Common myeloid progenitor, CD34-positive (primary cell): ENCODE measurements at regions of chr22 and their contacts with region 1.

Region 1: DNA sequence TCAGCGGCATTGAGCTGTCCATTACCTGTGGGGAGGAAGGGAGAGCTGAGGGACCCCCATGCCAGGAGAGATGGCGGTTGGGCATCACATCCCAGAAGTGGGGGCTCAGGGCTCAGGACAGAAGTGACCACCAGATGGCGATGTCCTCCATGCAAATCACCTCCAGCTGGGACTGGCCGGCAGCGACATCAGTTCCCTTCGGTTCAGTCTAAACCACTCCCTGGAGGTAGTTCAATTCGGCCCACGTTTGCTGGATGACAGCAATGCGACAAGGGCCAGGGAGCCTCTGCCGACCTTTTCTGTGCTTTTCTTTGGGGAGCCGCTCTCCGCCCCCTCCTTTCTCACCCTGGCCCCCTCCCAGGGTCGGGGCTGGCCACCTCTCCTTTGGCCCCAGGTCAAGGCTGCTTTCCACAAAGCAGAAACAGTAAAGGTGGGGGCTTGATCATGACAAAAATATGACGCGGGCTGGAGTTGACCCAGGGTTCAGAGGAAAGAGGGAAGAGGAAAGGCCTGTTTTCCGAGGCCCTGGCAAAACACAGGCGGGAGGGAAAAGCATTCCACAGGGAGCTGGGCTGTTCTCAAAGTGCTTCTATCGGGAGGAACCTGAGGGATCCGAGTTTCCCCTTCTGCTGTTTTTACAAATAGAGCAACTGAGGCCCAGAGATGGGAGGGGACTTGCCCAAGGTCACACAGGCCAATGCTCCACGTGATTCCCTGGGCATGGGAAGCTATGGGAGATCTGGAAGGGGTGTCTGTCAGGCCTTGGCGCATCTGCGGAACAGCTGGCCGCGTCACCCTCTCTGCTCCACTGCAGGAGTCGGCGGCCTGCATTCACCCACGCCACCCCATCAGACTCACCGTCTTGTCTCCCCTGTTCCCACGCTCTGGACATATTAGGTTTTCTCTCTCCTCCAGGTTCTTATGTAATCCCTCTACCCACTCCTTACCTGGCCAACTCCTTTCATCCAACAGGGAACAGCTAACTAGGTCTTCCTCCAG is 54.7 kb downstream of the FBXO7 start:
- DNase-seq: peak; percentile 83 to 92 (median 89)
- H3K4me3 ChIP-seq: no peak overlapping the region
- H3K27ac ChIP-seq: no peak overlapping the region
- H3K4me1 ChIP-seq: peaks cover 0 to 4% (median 3%) of the 10 kb centered on the region in 4 experiments
- H3K27me3 ChIP-seq: peaks cover 0 to 3% (median 0%) of the 10 kb centered on the region in 5 experiments

Region 2: DNA sequence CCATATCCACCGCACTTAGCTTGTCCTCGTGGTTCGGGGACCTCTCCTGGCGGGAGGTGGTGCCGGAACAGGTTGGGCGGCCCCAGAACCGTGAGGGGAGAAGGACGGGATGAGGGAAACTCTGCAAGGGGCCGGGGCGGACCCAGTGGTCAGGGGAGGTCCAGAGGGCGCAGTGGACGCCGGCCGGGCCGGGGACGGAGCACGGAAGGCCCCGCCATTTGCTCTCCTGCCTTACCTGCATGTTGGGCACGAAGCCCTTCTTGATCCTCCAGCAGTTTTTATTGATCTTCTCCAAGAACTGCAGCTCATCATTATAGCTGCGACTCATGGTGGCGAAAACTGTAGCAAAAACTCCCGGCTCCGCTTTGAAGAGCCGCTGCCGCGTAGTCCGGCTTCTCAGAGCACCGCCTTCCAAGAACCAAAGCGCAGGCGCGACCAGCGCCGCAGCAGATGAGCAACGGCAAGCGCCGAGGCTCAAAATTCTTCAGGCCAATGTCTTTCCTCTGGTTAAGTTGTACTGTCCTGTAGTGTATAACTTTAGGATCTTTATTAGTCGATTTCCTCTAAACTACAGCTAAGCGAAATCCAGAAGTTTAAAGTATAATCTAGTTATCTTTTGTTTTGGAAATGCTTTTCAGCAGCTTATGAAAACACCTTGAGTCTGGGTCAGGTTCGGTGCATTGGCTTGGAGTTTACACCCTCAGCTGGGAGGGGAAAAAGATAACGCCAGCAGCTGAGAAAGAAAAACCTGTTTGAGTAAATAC is 117.3 kb before region 1 on chr22 and contains the start of gene RTCB:
- CTCF ChIA-PET with region 1: no interaction called
- POLR2A ChIA-PET with region 1: no interaction called
- DNase-seq: peak; percentile 92 to 95 (median 94)
- H3K4me3 ChIP-seq: peak within 1 kb of the TSS; percentile 84 to 99 (median 97)
- H3K27ac ChIP-seq: peak within 1 kb of the TSS; percentile 71 to 87
- H3K4me1 ChIP-seq: peaks cover 11 to 25% (median 16%) of the 10 kb centered on the region in 4 experiments
- H3K27me3 ChIP-seq: peaks cover 0 to 2% (median 0%) of the 10 kb centered on the region in 5 experiments

Region 3: GRCh38 chr22:32518848-32519247 is 10.4 kb before region 1 on chr22:
- CTCF ChIA-PET with region 1: interaction called, 25 read pairs
- POLR2A ChIA-PET with region 1: no interaction called
- DNase-seq: no peak
- H3K4me3 ChIP-seq: no peak overlapping the region
- H3K27ac ChIP-seq: no peak overlapping the region
- H3K4me1 ChIP-seq: no peaks in the 10 kb centered on the region
- H3K27me3 ChIP-seq: no peaks in the 10 kb centered on the region

Region 4: DNA sequence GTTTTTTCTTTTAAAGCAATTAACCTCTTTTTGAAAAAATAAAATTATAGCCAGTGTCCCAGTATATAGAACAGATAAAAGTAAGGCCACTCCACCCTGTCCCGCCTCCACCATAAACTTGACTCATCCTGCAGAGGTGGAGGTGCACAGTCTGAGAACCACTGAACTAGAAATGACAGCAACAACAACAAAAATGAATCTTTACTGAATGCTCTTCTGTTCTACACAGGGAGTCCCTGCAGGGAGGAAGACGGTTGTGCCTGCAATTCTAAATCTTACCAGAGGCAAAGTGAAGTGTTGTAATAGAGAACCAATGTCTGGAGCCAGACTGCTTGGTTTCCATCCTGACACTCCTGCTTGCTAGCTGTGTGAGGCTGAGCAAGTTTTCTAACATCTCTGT is 107.6 kb after region 1 on chr22:
- CTCF ChIA-PET with region 1: no interaction called
- POLR2A ChIA-PET with region 1: no interaction called
- DNase-seq: peak in 1 of 3 donors; percentile 36
- H3K4me3 ChIP-seq: no peak overlapping the region
- H3K27ac ChIP-seq: no peak overlapping the region
- H3K4me1 ChIP-seq: peaks cover 4 to 21% (median 9%) of the 10 kb centered on the region in 4 experiments
- H3K27me3 ChIP-seq: no peaks in the 10 kb centered on the region

Region 5: DNA sequence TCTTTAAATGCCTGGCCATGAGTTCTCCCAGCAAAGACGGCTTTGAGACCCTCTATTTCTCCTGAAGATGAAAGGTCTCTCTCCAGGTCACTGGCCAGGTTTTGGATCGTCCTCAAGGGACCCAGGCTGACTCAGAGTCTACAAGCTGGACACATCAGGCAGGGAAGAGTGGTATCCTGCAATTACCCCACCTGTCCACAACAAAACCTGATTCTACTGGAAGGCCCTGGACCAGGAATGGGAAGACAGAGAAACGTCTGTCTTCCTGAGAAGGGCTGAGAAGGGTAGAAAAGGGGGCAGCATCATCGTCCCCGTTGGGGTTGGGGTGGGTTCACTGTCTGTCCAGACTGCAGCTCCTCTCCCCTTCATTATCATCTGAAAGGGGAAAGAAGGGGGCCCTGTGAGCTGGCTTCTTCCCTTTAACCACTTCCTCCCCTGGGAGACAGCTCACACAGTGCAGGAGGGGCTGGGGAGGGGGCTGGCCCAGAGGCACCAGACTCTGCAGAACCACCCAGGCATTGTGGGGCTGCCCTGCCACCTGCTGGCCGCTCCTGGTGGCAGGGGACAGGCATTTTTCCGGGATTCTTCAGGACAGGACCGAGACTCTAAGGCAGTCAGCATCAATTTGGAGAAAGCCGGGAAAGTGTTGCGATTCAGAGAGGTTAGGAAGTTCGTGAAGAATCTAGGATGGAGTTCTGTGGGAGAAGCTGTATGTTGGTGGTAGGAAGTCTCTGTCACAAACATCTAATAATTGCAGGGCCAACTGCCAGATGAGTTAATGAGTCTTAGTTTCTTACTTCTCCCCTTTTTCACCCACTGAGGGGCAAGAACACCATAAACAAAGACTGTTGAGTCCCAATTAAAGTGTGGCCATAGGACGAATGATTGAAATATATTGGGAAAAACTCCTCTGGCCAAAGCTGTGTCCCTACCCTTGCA is 471.3 kb after region 1 on chr22:
- CTCF ChIA-PET with region 1: interaction called, 48 read pairs
- POLR2A ChIA-PET with region 1: no interaction called
- DNase-seq: peak; percentile 46 to 67 (median 63)
- H3K4me3 ChIP-seq: no peak overlapping the region
- H3K27ac ChIP-seq: no peak overlapping the region
- H3K4me1 ChIP-seq: peaks cover 0 to 7% (median 5%) of the 10 kb centered on the region in 4 experiments
- H3K27me3 ChIP-seq: no peaks in the 10 kb centered on the region